Activated CD4-positive, alpha-beta memory T cell treated with anti-CD3 and anti-CD28 coated beads for 36 hours (primary cell): ENCODE measurements at regions of chr1 and their contacts with region 1.

Region 1: GRCh38 chr1:42941640-42942330 is 16.9 kb downstream of the SLC2A1 start:
- DNase-seq: peak; percentile 64
- H3K4me3 Mint-ChIP-seq: no peak overlapping the region
- H3K27ac Mint-ChIP-seq: peak overlapping the region; percentile 81
- H3K4me1 Mint-ChIP-seq: peaks cover 95% of the 10 kb centered on the region
- H3K27me3 Mint-ChIP-seq: no peaks in the 10 kb centered on the region

Region 2: GRCh38 chr1:42952303-42953001 is 10.7 kb after region 1 on chr1:
- CTCF ChIA-PET with region 1: interaction called, 5 read pairs
- POLR2A ChIA-PET with region 1: interaction called, 14 read pairs
- intact Hi-C with region 1: loop called (anchors 1 kb)
- DNase-seq: no peak
- H3K4me3 Mint-ChIP-seq: no peak overlapping the region
- H3K27ac Mint-ChIP-seq: peak overlapping the region; percentile 56
- H3K4me1 Mint-ChIP-seq: peaks cover 82% of the 10 kb centered on the region
- H3K27me3 Mint-ChIP-seq: no peaks in the 10 kb centered on the region